ENCODE measurements at regions of chr10 and their contacts with region 1.

Region 1: DNA sequence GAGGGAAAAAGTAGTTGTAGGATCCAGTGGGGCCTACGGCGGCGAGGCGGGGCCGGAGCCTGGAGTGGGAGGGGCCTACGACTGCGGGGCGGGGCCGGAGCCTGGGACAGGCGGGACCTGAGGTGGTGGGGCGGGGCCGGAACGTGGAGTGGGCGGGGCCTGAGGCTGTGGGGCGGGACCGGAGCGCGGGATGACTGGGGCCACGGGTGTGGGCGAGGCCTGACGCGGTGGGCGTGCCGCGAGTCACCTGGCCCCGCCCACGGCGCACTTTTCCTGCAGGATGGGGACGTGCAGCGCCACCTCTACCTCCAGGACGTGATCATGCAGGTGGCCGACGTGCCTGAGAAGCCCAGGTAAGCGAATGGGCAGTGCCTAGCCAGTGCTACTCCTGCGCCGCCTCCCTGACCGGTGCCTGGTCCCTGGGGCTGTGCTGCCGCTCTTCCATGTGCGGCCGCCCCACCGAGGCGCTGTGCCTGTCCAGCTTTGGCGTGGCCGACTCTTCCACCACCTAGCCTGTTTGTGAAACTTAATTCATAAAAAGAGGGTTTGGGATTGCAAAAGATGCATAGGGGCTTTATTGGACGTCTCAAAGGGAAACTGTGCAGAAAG is 501 bp downstream of the ZNF511 start:
- DNase-seq: peak; percentile 75 to 93 (median 88)
- H3K4me3 ChIP-seq: peak overlapping the region; percentile 72 to 100 (median 97)
- H3K27ac ChIP-seq: peak overlapping the region; percentile 28 to 100 (median 97)
- H3K27me3 ChIP-seq: no peaks in the 10 kb centered on the region
- CTCF ChIP-seq: peak in 2 of 56 donors; percentile 4

Region 2: DNA sequence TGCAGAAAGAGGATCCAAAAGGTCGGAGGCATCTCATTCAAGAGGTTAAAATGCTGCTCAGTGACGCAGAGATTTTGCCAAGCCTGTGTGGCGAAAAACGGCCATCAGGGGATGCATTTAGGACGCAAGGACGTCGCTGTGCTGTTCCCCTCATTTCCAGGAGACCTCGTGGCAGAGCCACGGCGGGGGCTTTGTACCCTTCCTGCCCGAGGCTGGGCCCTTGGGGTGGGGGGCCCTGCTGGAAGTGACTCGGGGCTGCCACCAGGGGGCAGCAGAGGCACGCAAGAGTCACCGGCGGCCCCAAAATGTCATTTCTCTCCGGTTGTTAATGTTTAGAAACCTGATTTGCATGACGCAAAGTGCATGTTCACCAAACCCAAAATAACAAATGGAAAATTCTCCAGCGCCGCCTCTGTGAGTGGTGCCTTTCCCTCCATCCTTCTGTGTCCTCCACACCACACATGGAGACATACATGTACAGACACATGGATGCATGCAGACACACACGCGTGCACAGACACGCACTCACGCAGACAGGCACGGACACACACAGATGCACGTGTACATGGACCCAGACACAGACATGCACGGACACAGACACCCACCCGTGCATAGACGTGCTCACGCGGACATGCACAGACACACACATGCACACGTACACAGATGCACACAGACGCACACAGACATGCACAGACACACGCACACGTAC is 472.2 kb before region 1 on chr10:
- intact Hi-C with region 1: loop called in 1 of 2 experiments (anchors 5 kb)
- DNase-seq: peak in 6 of 10 donors; percentile 35 to 75 (median 62)
- H3K4me3 ChIP-seq: peak overlapping the region in 30 of 59 donors; percentile 0 to 49 (median 29)
- H3K27ac ChIP-seq: peak overlapping the region in 4 of 59 donors; percentile 8 to 57 (median 26)
- H3K27me3 ChIP-seq: peaks cover 0 to 3% (median 0%) of the 10 kb centered on the region in 45 donors
- CTCF ChIP-seq: peak; percentile 79 to 100 (median 97)

Region 3: DNA sequence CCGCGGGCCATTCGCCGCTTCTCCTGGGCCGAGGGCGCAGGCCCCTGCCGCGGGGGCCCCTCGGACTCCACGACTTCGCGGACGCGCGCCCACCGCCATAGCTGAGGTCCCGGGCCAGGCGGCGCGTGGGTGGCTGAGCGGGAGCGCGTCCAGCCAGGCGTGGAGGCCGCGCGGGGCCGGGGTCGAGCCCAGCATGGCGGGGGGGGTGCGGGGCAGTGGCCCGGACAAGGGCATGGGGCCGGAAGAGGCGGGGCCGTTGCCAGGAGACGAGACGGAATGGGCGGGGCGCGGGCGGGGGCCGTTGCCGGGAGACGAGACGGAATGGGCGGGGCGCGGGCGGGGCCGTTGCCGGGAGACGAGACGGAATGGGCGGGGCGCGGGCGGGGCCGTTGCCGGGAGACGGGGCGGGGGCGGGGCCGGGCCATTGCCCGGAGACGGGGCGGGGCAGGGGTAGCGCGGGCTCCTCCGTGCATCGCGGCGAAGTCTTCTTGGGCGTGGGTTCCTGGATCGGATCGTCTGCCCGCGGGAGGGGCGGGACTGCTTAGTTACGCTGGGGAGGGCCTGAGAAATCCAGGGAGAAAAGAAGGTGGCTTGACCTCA is 47.4 kb before region 1 on chr10:
- intact Hi-C with region 1: loop called in 1 of 2 experiments (anchors 5 kb)
- DNase-seq: peak; percentile 76 to 90 (median 84)
- H3K4me3 ChIP-seq: peak overlapping the region; percentile 40 to 89 (median 71)
- H3K27ac ChIP-seq: peak overlapping the region in 47 of 59 donors; percentile 2 to 87 (median 67)
- H3K27me3 ChIP-seq: peaks cover 0 to 3% (median 0%) of the 10 kb centered on the region in 45 donors
- CTCF ChIP-seq: no peak

Region 4: GRCh38 chr10:133394064-133394663 is 84.9 kb after region 1 on chr10 and contains the start of gene MTG1:
- intact Hi-C with region 1: loop called (anchors 5 kb)
- DNase-seq: peak; percentile 78 to 97 (median 91)
- H3K4me3 ChIP-seq: peak within 1 kb of the TSS; percentile 65 to 99 (median 93)
- H3K27ac ChIP-seq: peak within 1 kb of the TSS in 58 of 59 donors; percentile 33 to 93 (median 83)
- H3K27me3 ChIP-seq: no peaks in the 10 kb centered on the region
- CTCF ChIP-seq: peak in 54 of 56 donors; percentile 34 to 82 (median 58)
- total RNA-seq, gene MTG1: 33.3 to 78.1 (median 50.8) TPM